IMR-90 (cell line): ENCODE measurements at regions of chr6 and their contacts with region 1.

Region 1: GRCh38 chr6:26017632-26017966 is 55.0 kb downstream of the TRIM38 start:
- DNase-seq: peak; percentile 95
- ATAC-seq: peak; percentile 34
- H3K4me3 ChIP-seq: peak overlapping the region; percentile 44
- H3K27ac ChIP-seq: peak overlapping the region; percentile 78
- H3K4me1 ChIP-seq: peaks cover 12% of the 10 kb centered on the region
- H3K27me3 ChIP-seq: no peaks in the 10 kb centered on the region
- CTCF ChIP-seq: peak; percentile 72
- POLR2A ChIP-seq: peak; percentile 97
- RAD21 ChIP-seq: no peak

Region 2: GRCh38 chr6:26003102-26003694 is 14.4 kb before region 1 on chr6:
- CTCF ChIA-PET with region 1: interaction called, 16 read pairs
- POLR2A ChIA-PET with region 1: no interaction called
- dilution Hi-C with region 1: no loop called
- in situ Hi-C with region 1: no loop called
- intact Hi-C with region 1: no loop called
- DNase-seq: peak; percentile 56
- ATAC-seq: peak; percentile 84
- H3K4me3 ChIP-seq: no peak overlapping the region
- H3K27ac ChIP-seq: no peak overlapping the region
- H3K4me1 ChIP-seq: 0 out of 2 replicates have a peak, but pooled peaks cover 1% of the 10 kb centered on the region
- H3K27me3 ChIP-seq: no peaks in the 10 kb centered on the region
- CTCF ChIP-seq: peak; percentile 78
- POLR2A ChIP-seq: no peak
- RAD21 ChIP-seq: peak; percentile 79